Natural killer cell (primary cell): ENCODE measurements at regions of chr12 and their contacts with region 1.

Region 1: GRCh38 chr12:56041552-56042429 is at the start of gene RPS26:
- DNase-seq: peak; percentile 85 to 99
- ATAC-seq: peak; percentile 89 to 97 (median 93)
- H3K4me3 ChIP-seq: peak within 1 kb of the TSS; percentile 83
- H3K4me3 Mint-ChIP-seq: peak within 1 kb of the TSS; percentile 99
- H3K27ac ChIP-seq: peak within 1 kb of the TSS; percentile 86
- H3K27ac Mint-ChIP-seq: peak within 1 kb of the TSS; percentile 93 to 98
- H3K4me1 ChIP-seq: peaks cover 14% of the 10 kb centered on the region
- H3K4me1 Mint-ChIP-seq: peaks cover 24 to 25% of the 10 kb centered on the region in 2 donors
- H3K27me3 ChIP-seq: no peaks in the 10 kb centered on the region
- H3K27me3 Mint-ChIP-seq: no peaks in the 10 kb centered on the region
- CTCF ChIP-seq: no peak
- total RNA-seq, gene RPS26: 29.5 to 50.3 (median 35.5) TPM

Region 2: GRCh38 chr12:55926738-55927587 is 114.8 kb before region 1 on chr12:
- intact Hi-C with region 1: loop called (anchors 5 kb)
- DNase-seq: peak; percentile 83 to 96
- ATAC-seq: peak; percentile 60 to 80 (median 70)
- H3K4me3 ChIP-seq: peak overlapping the region; percentile 95
- H3K4me3 Mint-ChIP-seq: peak overlapping the region; percentile 97
- H3K27ac ChIP-seq: peak overlapping the region; percentile 86
- H3K27ac Mint-ChIP-seq: peak overlapping the region; percentile 97 to 98
- H3K4me1 ChIP-seq: peaks cover 48% of the 10 kb centered on the region
- H3K4me1 Mint-ChIP-seq: peaks cover 55 to 69% of the 10 kb centered on the region in 2 donors
- H3K27me3 ChIP-seq: no peaks in the 10 kb centered on the region
- H3K27me3 Mint-ChIP-seq: no peaks in the 10 kb centered on the region
- CTCF ChIP-seq: peak; percentile 85

Region 3: GRCh38 chr12:55996715-55997534 is 44.9 kb before region 1 on chr12 and contains the start of gene SUOX:
- intact Hi-C with region 1: loop called (anchors 2 kb)
- DNase-seq: peak; percentile 39 to 57
- ATAC-seq: peak; percentile 93
- H3K4me3 ChIP-seq: peak within 1 kb of the TSS; percentile 42
- H3K4me3 Mint-ChIP-seq: peak within 1 kb of the TSS; percentile 89
- H3K27ac ChIP-seq: peak within 1 kb of the TSS; percentile 15
- H3K27ac Mint-ChIP-seq: peak within 1 kb of the TSS; percentile 65 to 84
- H3K4me1 ChIP-seq: peaks cover 21% of the 10 kb centered on the region
- H3K4me1 Mint-ChIP-seq: peaks cover 14 to 20% of the 10 kb centered on the region in 2 donors
- H3K27me3 ChIP-seq: no peaks in the 10 kb centered on the region
- H3K27me3 Mint-ChIP-seq: no peaks in the 10 kb centered on the region
- CTCF ChIP-seq: no peak
- total RNA-seq, gene SUOX: 11.0 to 15.9 (median 14.6) TPM

Region 4: GRCh38 chr12:56158029-56158925 is 116.5 kb after region 1 on chr12 and contains the start of gene MYL6:
- intact Hi-C with region 1: loop called (anchors 10 kb)
- DNase-seq: peak; percentile 81 to 98
- ATAC-seq: peak; percentile 83 to 88 (median 85)
- H3K4me3 ChIP-seq: peak within 1 kb of the TSS; percentile 85
- H3K4me3 Mint-ChIP-seq: peak within 1 kb of the TSS; percentile 96
- H3K27ac ChIP-seq: peak within 1 kb of the TSS; percentile 95
- H3K27ac Mint-ChIP-seq: peak within 1 kb of the TSS; percentile 96 to 98
- H3K4me1 ChIP-seq: peaks cover 42% of the 10 kb centered on the region
- H3K4me1 Mint-ChIP-seq: peaks cover 48 to 62% of the 10 kb centered on the region in 2 donors
- H3K27me3 ChIP-seq: no peaks in the 10 kb centered on the region
- H3K27me3 Mint-ChIP-seq: no peaks in the 10 kb centered on the region
- CTCF ChIP-seq: no peak
- total RNA-seq, gene MYL6: 881 to 1,204 (median 1,015) TPM

Region 5: GRCh38 chr12:56224102-56224701 is 182.4 kb after region 1 on chr12 and contains the start of gene NABP2:
- intact Hi-C with region 1: loop called (anchors 10 kb)
- DNase-seq: peak; percentile 85 to 96
- ATAC-seq: peak; percentile 70 to 86 (median 79)
- H3K4me3 ChIP-seq: peak within 1 kb of the TSS; percentile 56
- H3K4me3 Mint-ChIP-seq: peak within 1 kb of the TSS; percentile 92
- H3K27ac ChIP-seq: peak within 1 kb of the TSS; percentile 70
- H3K27ac Mint-ChIP-seq: peak within 1 kb of the TSS; percentile 100
- H3K4me1 ChIP-seq: peaks cover 47% of the 10 kb centered on the region
- H3K4me1 Mint-ChIP-seq: peaks cover 48 to 53% of the 10 kb centered on the region in 2 donors
- H3K27me3 ChIP-seq: no peaks in the 10 kb centered on the region
- H3K27me3 Mint-ChIP-seq: no peaks in the 10 kb centered on the region
- CTCF ChIP-seq: peak; percentile 91
- total RNA-seq, gene NABP2: 21.6 to 23.4 (median 22.6) TPM